Naive thymus-derived CD4-positive, alpha-beta T cell (primary cell): ENCODE measurements at regions of chr12 and their contacts with region 1.

Region 1: DNA sequence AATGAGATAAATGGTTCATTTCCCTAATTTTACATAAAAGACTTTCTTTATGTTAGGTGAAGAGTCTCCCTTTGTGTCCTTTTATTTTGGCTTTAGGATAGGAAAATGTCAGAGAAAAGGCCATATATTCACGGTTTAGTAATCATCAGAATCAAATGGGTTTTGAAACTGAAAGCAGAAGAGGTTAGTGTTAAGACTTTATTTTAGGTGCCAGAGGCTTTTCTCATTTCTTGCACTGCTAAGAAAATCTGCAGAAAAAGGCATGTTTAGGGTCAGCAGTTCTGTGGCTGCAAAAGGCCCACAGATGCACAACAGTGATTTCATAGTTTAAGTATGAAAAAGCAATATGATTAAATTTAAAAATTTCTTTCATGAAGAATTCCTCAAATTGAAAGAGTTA is 80.4 kb upstream of the SINHCAF start:
- DNase-seq: no peak
- ATAC-seq: no peak
- H3K4me3 ChIP-seq: no peak overlapping the region
- H3K4me3 Mint-ChIP-seq: no peak overlapping the region
- H3K27ac ChIP-seq: no peak overlapping the region
- H3K27ac Mint-ChIP-seq: peak overlapping the region in 1 of 9 donors; percentile 1
- H3K4me1 ChIP-seq: no peaks in the 10 kb centered on the region
- H3K4me1 Mint-ChIP-seq: peaks cover 0 to 7% (median 0%) of the 10 kb centered on the region in 7 donors
- H3K27me3 ChIP-seq: no peaks in the 10 kb centered on the region
- H3K27me3 Mint-ChIP-seq: peaks cover 0 to 2% (median 0%) of the 10 kb centered on the region in 5 donors

Region 2: GRCh38 chr12:31631784-31632183 is 225.4 kb after region 1 on chr12:
- CTCF ChIA-PET with region 1: interaction called, 8 read pairs
- POLR2A ChIA-PET with region 1: no interaction called
- intact Hi-C with region 1: loop called (anchors 1 kb)
- DNase-seq: no peak
- ATAC-seq: no peak
- H3K4me3 ChIP-seq: no peak overlapping the region
- H3K4me3 Mint-ChIP-seq: no peak overlapping the region
- H3K27ac ChIP-seq: no peak overlapping the region
- H3K27ac Mint-ChIP-seq: no peak overlapping the region
- H3K4me1 ChIP-seq: no peaks in the 10 kb centered on the region
- H3K4me1 Mint-ChIP-seq: peaks cover 0 to 7% (median 7%) of the 10 kb centered on the region in 7 donors
- H3K27me3 ChIP-seq: no peaks in the 10 kb centered on the region
- H3K27me3 Mint-ChIP-seq: peaks cover 0 to 7% (median 0%) of the 10 kb centered on the region in 5 donors

Region 3: GRCh38 chr12:31650927-31651326 is 244.6 kb after region 1 on chr12:
- CTCF ChIA-PET with region 1: interaction called, 5 read pairs
- POLR2A ChIA-PET with region 1: no interaction called
- intact Hi-C with region 1: loop called in 1 of 2 experiments (anchors 5 kb)
- DNase-seq: no peak
- ATAC-seq: no peak
- H3K4me3 ChIP-seq: no peak overlapping the region
- H3K4me3 Mint-ChIP-seq: no peak overlapping the region
- H3K27ac ChIP-seq: no peak overlapping the region
- H3K27ac Mint-ChIP-seq: no peak overlapping the region
- H3K4me1 ChIP-seq: peaks cover 0 to 7% of the 10 kb centered on the region in 2 donors
- H3K4me1 Mint-ChIP-seq: peaks cover 6 to 16% (median 13%) of the 10 kb centered on the region in 7 donors
- H3K27me3 ChIP-seq: no peaks in the 10 kb centered on the region
- H3K27me3 Mint-ChIP-seq: no peaks in the 10 kb centered on the region

Region 4: DNA sequence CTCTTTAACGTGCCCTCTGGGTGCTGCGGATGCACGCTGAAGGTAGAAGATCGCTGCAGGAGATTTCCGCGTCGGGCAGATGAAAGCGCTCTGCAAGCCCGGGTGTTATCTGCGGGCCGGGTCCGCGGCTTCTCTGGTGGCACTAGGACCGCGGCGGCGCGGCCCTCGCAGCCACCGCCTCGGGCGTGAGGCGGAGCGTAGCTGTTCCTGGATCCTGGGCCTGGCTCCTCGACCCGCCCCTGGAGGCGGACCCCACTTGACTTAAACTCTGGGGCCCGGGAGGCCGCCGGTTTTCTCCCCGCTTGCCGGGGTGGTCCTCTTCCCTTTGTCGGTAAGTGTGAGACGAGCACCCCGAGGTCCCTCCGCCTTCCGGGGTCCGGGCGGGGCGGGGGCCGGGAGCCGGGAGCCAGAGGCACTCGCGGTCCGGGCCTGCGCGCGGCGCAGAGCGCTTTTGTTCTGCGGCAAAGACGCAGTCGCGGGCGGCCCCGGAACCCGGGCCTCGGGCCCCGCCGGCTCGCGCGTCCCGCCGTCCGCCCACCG is 552.9 kb after region 1 on chr12 and contains the start of gene RESF1:
- CTCF ChIA-PET with region 1: no interaction called
- POLR2A ChIA-PET with region 1: no interaction called
- intact Hi-C with region 1: no loop called
- DNase-seq: peak; percentile 67 to 89 (median 85)
- ATAC-seq: peak; percentile 88
- H3K4me3 ChIP-seq: peak within 1 kb of the TSS; percentile 91
- H3K4me3 Mint-ChIP-seq: peak within 1 kb of the TSS; percentile 91 to 97 (median 94)
- H3K27ac ChIP-seq: peak within 1 kb of the TSS; percentile 86
- H3K27ac Mint-ChIP-seq: peak within 1 kb of the TSS; percentile 91 to 98 (median 96)
- H3K4me1 ChIP-seq: peaks cover 23 to 49% of the 10 kb centered on the region in 2 donors
- H3K4me1 Mint-ChIP-seq: peaks cover 43 to 74% (median 57%) of the 10 kb centered on the region in 7 donors
- H3K27me3 ChIP-seq: no peaks in the 10 kb centered on the region
- H3K27me3 Mint-ChIP-seq: no peaks in the 10 kb centered on the region
- total RNA-seq, gene RESF1: 141 to 490 (median 161) TPM

Region 5: GRCh38 chr12:32069071-32069470 is 662.7 kb after region 1 on chr12:
- CTCF ChIA-PET with region 1: no interaction called
- POLR2A ChIA-PET with region 1: no interaction called
- intact Hi-C with region 1: loop called in 1 of 2 experiments (anchors 10 kb)
- DNase-seq: no peak
- ATAC-seq: no peak
- H3K4me3 ChIP-seq: no peak overlapping the region
- H3K4me3 Mint-ChIP-seq: no peak overlapping the region
- H3K27ac ChIP-seq: no peak overlapping the region
- H3K27ac Mint-ChIP-seq: no peak overlapping the region
- H3K4me1 ChIP-seq: no peaks in the 10 kb centered on the region
- H3K4me1 Mint-ChIP-seq: peaks cover 0 to 7% (median 0%) of the 10 kb centered on the region in 7 donors
- H3K27me3 ChIP-seq: no peaks in the 10 kb centered on the region
- H3K27me3 Mint-ChIP-seq: peaks cover 0 to 8% (median 0%) of the 10 kb centered on the region in 5 donors

Region 6: DNA sequence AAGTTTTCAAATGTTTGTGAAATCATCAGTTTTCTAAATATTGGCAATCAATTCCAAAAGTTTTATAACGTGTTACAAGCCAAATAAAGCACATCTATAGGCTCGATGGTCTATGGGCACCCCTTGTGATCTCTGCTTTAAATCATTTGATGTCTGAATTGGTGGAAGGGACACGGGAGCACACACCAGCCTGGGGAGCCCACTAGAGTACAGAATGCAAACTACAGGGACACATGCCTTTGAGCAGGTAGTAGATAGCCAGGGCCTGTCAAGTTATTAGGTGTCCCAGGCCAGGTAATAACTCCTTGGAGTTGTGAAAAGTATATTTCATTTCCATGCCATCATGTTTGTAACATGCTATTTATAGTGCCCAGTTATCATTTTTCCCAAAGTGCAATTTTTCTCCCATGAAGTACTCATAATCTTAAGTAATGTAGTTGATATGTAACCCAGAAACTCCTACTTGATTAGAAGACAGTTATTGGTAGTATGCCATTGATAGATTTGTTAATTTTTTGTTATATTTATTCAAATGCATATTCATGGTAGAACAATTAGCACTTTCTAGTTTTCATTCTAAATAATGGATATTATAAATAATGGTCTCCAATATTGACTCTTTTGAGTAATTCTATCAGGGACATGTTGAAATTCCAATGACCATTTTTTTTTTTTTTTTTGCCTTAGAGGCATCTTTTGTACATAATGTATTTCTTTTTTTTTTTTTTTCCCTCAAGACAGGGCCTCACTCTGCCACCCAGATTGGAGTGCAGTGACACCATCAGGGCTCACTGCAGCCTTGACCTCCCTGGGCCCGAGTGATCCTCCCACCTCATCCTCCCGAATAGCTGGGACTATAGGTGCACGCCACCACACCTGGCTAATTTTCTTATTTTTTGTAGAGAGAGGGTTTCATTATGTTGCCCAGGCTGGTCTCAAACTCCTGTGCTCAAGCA is 896.2 kb after region 1 on chr12:
- CTCF ChIA-PET with region 1: interaction called, 3 read pairs
- POLR2A ChIA-PET with region 1: no interaction called
- intact Hi-C with region 1: loop called in 1 of 2 experiments (anchors 1 kb)
- DNase-seq: peak in 4 of 9 donors; percentile 8 to 28 (median 17)
- ATAC-seq: peak; percentile 71
- H3K4me3 ChIP-seq: no peak overlapping the region
- H3K4me3 Mint-ChIP-seq: no peak overlapping the region
- H3K27ac ChIP-seq: no peak overlapping the region
- H3K27ac Mint-ChIP-seq: peak overlapping the region in 5 of 9 donors; percentile 25 to 62 (median 31)
- H3K4me1 ChIP-seq: no peaks in the 10 kb centered on the region
- H3K4me1 Mint-ChIP-seq: peaks cover 0 to 19% (median 0%) of the 10 kb centered on the region in 7 donors
- H3K27me3 ChIP-seq: no peaks in the 10 kb centered on the region
- H3K27me3 Mint-ChIP-seq: no peaks in the 10 kb centered on the region

Region 7: DNA sequence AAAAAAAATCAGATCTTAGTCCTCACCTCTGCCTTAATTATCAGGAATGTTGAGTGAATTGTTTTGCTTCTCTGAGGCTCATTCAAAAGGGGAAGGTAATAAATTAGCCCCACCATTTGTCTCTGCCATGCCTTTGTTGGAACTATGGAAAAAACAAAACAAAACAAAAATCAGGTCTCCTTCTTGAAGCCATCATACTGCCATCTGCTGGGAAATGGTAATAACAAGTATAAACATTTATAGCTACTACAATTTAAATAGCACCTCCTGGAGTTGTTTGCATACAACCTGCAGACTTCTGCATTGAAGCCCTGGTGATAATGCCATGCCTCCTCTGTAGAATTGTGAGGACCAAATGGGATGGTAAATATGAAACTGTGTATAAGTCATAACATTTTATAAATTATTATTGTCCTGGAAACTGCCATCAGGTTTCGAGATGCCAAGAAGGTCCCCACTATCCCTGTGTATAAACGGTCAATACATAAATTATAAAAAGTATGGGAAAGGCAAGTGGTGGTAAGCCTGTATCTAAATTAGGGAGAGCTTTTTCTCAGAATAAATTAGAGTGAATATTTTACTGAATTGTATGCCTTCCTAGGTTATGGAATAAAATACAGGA is 905.8 kb after region 1 on chr12:
- CTCF ChIA-PET with region 1: interaction called, 4 read pairs
- POLR2A ChIA-PET with region 1: no interaction called
- intact Hi-C with region 1: loop called (anchors 1 to 5 kb)
- DNase-seq: peak in 7 of 9 donors; percentile 22 to 63 (median 39)
- ATAC-seq: peak; percentile 69
- H3K4me3 ChIP-seq: no peak overlapping the region
- H3K4me3 Mint-ChIP-seq: peak overlapping the region in 3 of 10 donors; percentile 54 to 61 (median 54)
- H3K27ac ChIP-seq: no peak overlapping the region
- H3K27ac Mint-ChIP-seq: peak overlapping the region in 7 of 9 donors; percentile 22 to 92 (median 44)
- H3K4me1 ChIP-seq: no peaks in the 10 kb centered on the region
- H3K4me1 Mint-ChIP-seq: peaks cover 0 to 12% (median 9%) of the 10 kb centered on the region in 7 donors
- H3K27me3 ChIP-seq: no peaks in the 10 kb centered on the region
- H3K27me3 Mint-ChIP-seq: no peaks in the 10 kb centered on the region

Region 8: GRCh38 chr12:32671930-32672780 is 1265.8 kb after region 1 on chr12:
- CTCF ChIA-PET with region 1: no interaction called
- POLR2A ChIA-PET with region 1: no interaction called
- intact Hi-C with region 1: loop called in 1 of 2 experiments (anchors 2 kb)
- DNase-seq: no peak
- ATAC-seq: no peak
- H3K4me3 ChIP-seq: no peak overlapping the region
- H3K4me3 Mint-ChIP-seq: no peak overlapping the region
- H3K27ac ChIP-seq: no peak overlapping the region
- H3K27ac Mint-ChIP-seq: no peak overlapping the region
- H3K4me1 ChIP-seq: no peaks in the 10 kb centered on the region
- H3K4me1 Mint-ChIP-seq: peaks cover 0 to 3% (median 0%) of the 10 kb centered on the region in 7 donors
- H3K27me3 ChIP-seq: no peaks in the 10 kb centered on the region
- H3K27me3 Mint-ChIP-seq: peaks cover 0 to 4% (median 0%) of the 10 kb centered on the region in 5 donors